ENCODE measurements at regions of chr19 and their contacts with region 1.

Region 1: GRCh38 chr19:11374433-11375142 is at the start of gene SWSAP1:
- DNase-seq: peak; percentile 99
- H3K4me3 Mint-ChIP-seq: no peak within 1 kb of the TSS
- H3K27ac Mint-ChIP-seq: no peak within 1 kb of the TSS
- H3K4me1 Mint-ChIP-seq: peaks cover 35% of the 10 kb centered on the region
- H3K27me3 Mint-ChIP-seq: no peaks in the 10 kb centered on the region
- total RNA-seq, gene SWSAP1: 1.1 to 2.1 TPM

Region 2: DNA sequence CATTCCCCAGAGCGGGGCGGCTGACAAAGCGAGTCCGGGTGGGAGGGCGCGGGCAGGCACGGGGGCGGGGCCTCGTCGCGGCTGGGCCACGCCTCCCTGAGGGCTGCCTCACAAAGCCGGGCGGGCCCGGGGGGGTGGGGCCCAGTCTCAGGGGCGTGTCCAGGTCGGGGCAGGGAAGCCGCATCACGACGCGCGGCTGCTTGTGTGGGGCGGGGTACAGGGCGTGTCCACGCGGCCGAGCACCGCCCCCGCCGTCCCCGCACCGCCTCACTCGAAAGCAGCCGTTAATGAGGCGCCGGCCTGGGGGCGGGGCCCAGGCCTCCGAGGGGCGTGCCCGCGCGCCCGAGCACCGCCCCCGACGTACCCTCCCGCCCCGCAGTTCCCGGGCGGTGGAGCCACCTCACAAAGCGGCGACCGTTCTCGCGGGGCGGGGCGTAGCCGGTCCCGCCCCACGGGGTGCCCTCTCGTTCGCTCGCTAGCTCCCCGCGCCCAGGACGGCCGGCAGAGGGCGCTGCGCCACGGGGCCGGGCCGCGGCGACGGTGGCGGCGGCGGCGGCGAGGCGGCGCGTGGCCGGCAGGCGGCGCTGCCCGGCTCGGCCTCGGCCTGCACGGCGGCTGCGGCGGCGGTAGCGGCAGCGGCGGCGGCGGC is 503.5 kb before region 1 on chr19 and contains the start of gene CARM1:
- CTCF ChIA-PET with region 1: no interaction called
- intact Hi-C with region 1: loop called (anchors 1 kb)
- DNase-seq: peak; percentile 99
- H3K4me3 Mint-ChIP-seq: peak within 1 kb of the TSS; percentile 85
- H3K27ac Mint-ChIP-seq: peak within 1 kb of the TSS; percentile 93
- H3K4me1 Mint-ChIP-seq: peaks cover 31% of the 10 kb centered on the region
- H3K27me3 Mint-ChIP-seq: no peaks in the 10 kb centered on the region
- total RNA-seq, gene CARM1: 88.4 to 89.3 TPM

Region 3: GRCh38 chr19:11090054-11090900 is 284.3 kb before region 1 on chr19:
- CTCF ChIA-PET with region 1: no interaction called
- intact Hi-C with region 1: loop called (anchors 2 kb)
- DNase-seq: peak; percentile 99
- H3K4me3 Mint-ChIP-seq: peak overlapping the region; percentile 94
- H3K27ac Mint-ChIP-seq: peak overlapping the region; percentile 99
- H3K4me1 Mint-ChIP-seq: peaks cover 48% of the 10 kb centered on the region
- H3K27me3 Mint-ChIP-seq: no peaks in the 10 kb centered on the region

Region 4: DNA sequence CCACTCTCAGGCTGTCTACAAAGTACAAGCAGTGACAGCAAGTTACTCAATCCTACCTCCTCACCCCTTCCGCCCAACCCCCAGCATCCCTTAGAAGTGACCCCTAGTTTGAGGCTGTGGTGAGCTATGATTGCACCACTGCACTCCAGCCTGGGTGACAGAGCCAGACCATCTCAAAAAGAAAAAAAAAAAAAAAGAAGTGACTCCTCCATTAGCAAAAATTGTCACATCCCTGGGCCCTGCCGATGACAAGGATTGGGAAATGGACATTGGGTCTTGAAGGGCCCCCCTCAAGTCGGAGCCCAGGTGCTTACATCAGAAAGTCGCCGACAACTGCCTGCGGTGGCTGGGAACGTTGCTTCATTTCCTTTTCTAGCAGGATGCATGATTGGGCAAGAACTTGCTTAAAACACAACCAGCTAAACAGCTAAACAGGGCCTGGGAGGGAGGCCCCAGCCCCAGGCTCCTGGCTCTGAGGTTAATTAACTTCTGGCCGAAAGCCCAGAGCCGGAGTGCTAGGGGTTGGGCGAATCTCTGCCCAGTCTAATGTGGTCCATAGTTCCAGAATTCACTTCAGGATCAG is 50.4 kb before region 1 on chr19:
- CTCF ChIA-PET with region 1: interaction called, 4 read pairs
- intact Hi-C with region 1: loop called (anchors 2 kb)
- DNase-seq: peak; percentile 85
- H3K4me3 Mint-ChIP-seq: peak overlapping the region; percentile 75
- H3K27ac Mint-ChIP-seq: peak overlapping the region; percentile 87
- H3K4me1 Mint-ChIP-seq: peaks cover 20% of the 10 kb centered on the region
- H3K27me3 Mint-ChIP-seq: peaks cover 7% of the 10 kb centered on the region

Region 5: DNA sequence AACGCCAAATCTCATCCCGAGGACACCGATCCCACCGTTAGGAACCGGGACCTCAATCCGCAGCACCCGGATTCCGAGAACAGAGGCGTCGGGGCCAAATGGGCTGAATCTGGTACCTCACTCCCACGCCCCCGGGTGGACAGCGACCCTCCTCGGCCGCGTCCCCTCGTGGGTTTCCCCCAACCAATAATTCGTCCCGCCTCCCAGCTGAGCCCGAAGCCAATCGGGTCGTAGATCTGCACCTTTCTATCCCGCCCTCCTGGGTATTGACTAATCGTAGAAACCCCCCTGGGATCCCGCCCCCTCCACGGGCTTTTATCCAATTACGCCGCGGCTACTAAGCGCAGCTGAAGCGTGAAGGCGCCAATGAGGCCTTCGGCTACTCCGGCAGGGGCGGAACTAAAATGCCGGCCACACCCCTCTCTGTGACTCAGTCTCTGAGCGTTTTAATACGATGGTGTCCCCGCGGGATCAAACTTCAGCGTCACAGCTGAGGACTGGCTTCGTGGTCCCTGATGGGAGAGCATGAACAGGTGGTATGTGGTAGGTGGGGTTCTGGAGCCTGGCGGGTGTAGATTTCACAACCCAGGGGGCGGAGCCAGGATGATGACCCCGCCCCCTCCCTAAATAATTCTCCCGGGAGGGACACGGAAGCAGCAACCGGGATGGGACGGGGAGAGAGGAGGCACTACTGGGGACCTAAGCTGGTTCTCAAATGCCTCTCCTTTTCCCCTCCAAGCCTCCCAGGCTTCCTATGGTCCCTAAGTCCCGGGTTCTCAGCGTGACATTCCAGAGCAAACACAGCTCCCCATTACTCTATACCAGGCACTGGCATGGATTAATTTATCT is 28.3 kb before region 1 on chr19 and contains the starts of genes CCDC159 and TMEM205:
- CTCF ChIA-PET with region 1: interaction called, 3 read pairs
- intact Hi-C with region 1: loop called (anchors 1 kb)
- DNase-seq: peak; percentile 100
- H3K4me3 Mint-ChIP-seq: peak within 1 kb of the TSS; percentile 97
- H3K27ac Mint-ChIP-seq: peak within 1 kb of the TSS; percentile 86
- H3K4me1 Mint-ChIP-seq: peaks cover 26% of the 10 kb centered on the region
- H3K27me3 Mint-ChIP-seq: no peaks in the 10 kb centered on the region
- total RNA-seq, gene CCDC159: 15.2 to 16.5 TPM
- total RNA-seq, gene TMEM205: 21.4 to 24.2 TPM

Region 6: GRCh38 chr19:11528551-11529341 is 154.2 kb after region 1 on chr19 and contains the start of gene ECSIT:
- CTCF ChIA-PET with region 1: no interaction called
- intact Hi-C with region 1: loop called (anchors 1 kb)
- DNase-seq: peak; percentile 97
- H3K4me3 Mint-ChIP-seq: peak within 1 kb of the TSS; percentile 97
- H3K27ac Mint-ChIP-seq: peak within 1 kb of the TSS; percentile 90
- H3K4me1 Mint-ChIP-seq: peaks cover 26% of the 10 kb centered on the region
- H3K27me3 Mint-ChIP-seq: no peaks in the 10 kb centered on the region
- total RNA-seq, gene ECSIT: 42.6 to 46.0 TPM

Measured in activated naive CD4-positive, alpha-beta T cell treated with anti-CD3 and anti-CD28 coated beads for 36 hours (primary cell).